Psoas muscle (tissue), 8 donors: ENCODE measurements at regions of chr12 and their contacts with region 1.

Region 1: DNA sequence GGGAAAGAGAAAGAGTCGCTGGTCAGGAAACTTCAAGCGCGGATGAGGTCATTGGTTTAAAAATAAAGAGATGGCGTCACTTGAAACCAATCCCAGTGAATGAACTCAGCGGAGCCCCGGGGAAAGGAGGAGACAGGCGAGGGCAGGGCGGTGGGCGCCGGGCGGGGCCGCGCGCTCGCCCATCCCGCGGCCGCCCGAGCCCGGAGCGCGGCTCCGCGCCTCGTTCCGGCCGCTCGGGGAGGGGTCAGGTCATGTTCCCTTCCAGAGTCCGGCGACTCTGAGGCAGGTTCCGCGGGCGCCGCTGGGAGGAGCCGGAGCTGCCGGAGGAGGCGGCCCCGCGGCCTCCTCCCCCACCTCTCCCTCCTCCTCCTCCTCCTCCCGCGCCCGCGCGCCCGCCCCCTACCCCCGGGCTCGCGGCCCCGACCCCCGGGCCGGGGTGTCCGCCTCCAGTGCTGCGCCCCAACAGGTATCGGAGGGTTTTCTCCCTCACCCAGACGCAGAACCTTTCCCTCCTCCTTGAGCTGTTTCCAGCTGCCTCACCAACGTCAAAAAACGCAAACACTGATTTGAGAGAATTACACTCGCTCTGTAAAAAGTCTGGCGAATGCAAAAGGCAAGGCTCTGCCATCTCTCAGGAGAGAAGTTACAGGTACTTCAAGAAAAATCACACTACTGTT is at the start of gene DUSP16:
- DNase-seq: peak; percentile 91 to 96
- ATAC-seq: peak; percentile 91 to 96 (median 94)
- H3K4me3 ChIP-seq: peak within 1 kb of the TSS; percentile 73
- H3K27ac ChIP-seq: peak within 1 kb of the TSS; percentile 98
- H3K4me1 ChIP-seq: peaks cover 20% of the 10 kb centered on the region
- H3K27me3 ChIP-seq: no peaks in the 10 kb centered on the region
- CTCF ChIP-seq: peak; percentile 28
- total RNA-seq, gene DUSP16: 14.2 to 23.8 (median 19.7) TPM

Region 2: GRCh38 chr12:12505544-12506495 is 56.9 kb before region 1 on chr12:
- intact Hi-C with region 1: loop called (anchors 5 kb)
- DNase-seq: no peak
- ATAC-seq: peak; percentile 34 to 60 (median 52)
- H3K4me3 ChIP-seq: peak overlapping the region; percentile 41
- H3K27ac ChIP-seq: peak overlapping the region; percentile 65
- H3K4me1 ChIP-seq: peaks cover 52% of the 10 kb centered on the region
- H3K27me3 ChIP-seq: no peaks in the 10 kb centered on the region
- CTCF ChIP-seq: no peak

Region 3: DNA sequence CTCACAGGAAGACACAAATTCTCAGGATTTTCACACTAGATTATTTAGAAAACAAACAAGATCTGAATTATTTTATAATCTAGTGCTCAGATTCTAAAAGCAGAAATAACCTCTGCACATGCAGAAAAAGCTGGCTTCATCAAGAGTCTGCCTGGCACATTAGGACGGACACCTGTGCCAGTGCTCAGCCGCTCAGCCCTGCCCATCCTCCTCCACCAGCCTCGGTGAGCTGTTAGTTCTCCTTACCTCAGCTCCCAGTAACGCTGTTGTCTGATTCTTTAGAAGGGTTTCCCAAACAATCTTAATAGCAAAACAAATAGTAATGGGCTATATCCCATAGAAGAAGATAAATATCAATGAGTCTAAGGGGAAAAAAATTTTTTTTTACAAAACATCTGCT is 27.7 kb before region 1 on chr12:
- intact Hi-C with region 1: loop called in 1 of 2 experiments (anchors 1 kb)
- DNase-seq: peak in 1 of 2 donors; percentile 58
- ATAC-seq: peak; percentile 72 to 80 (median 76)
- H3K4me3 ChIP-seq: peak overlapping the region; percentile 12
- H3K27ac ChIP-seq: peak overlapping the region; percentile 82
- H3K4me1 ChIP-seq: peaks cover 71% of the 10 kb centered on the region
- H3K27me3 ChIP-seq: no peaks in the 10 kb centered on the region
- CTCF ChIP-seq: no peak

Region 4: GRCh38 chr12:12654691-12655460 is 92.2 kb after region 1 on chr12:
- intact Hi-C with region 1: loop called in 1 of 2 experiments (anchors 10 kb)
- DNase-seq: no peak
- ATAC-seq: no peak
- H3K4me3 ChIP-seq: no peak overlapping the region
- H3K27ac ChIP-seq: no peak overlapping the region
- H3K4me1 ChIP-seq: peaks cover 3% of the 10 kb centered on the region
- H3K27me3 ChIP-seq: no peaks in the 10 kb centered on the region
- CTCF ChIP-seq: no peak

Region 5: DNA sequence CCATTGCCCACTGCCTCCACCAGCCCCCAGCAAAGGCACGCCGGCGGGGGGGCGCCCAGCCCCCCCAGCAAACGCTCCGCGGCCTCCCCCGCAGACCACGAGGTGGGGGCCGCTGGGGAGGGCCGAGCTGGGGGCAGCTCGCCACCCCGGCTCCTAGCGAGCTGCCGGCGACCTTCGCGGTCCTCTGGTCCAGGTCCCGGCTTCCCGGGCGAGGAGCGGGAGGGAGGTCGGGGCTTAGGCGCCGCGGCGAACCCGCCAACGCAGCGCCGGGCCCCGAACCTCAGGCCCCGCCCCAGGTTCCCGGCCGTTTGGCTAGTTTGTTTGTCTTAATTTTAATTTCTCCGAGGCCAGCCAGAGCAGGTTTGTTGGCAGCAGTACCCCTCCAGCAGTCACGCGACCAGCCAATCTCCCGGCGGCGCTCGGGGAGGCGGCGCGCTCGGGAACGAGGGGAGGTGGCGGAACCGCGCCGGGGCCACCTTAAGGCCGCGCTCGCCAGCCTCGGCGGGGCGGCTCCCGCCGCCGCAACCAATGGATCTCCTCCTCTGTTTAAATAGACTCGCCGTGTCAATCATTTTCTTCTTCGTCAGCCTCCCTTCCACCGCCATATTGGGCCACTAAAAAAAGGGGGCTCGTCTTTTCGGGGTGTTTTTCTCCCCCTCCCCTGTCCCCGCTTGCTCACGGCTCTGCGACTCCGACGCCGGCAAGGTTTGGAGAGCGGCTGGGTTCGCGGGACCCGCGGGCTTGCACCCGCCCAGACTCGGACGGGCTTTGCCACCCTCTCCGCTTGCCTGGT is 154.3 kb after region 1 on chr12 and contains the start of gene CDKN1B:
- intact Hi-C with region 1: loop called in 1 of 2 experiments (anchors 5 kb)
- DNase-seq: peak; percentile 91 to 96
- ATAC-seq: peak; percentile 95 to 97 (median 96)
- H3K4me3 ChIP-seq: peak within 1 kb of the TSS; percentile 84
- H3K27ac ChIP-seq: peak within 1 kb of the TSS; percentile 98
- H3K4me1 ChIP-seq: peaks cover 48% of the 10 kb centered on the region
- H3K27me3 ChIP-seq: no peaks in the 10 kb centered on the region
- CTCF ChIP-seq: no peak
- total RNA-seq, gene CDKN1B: 32.2 to 61.0 (median 38.0) TPM

Region 6: DNA sequence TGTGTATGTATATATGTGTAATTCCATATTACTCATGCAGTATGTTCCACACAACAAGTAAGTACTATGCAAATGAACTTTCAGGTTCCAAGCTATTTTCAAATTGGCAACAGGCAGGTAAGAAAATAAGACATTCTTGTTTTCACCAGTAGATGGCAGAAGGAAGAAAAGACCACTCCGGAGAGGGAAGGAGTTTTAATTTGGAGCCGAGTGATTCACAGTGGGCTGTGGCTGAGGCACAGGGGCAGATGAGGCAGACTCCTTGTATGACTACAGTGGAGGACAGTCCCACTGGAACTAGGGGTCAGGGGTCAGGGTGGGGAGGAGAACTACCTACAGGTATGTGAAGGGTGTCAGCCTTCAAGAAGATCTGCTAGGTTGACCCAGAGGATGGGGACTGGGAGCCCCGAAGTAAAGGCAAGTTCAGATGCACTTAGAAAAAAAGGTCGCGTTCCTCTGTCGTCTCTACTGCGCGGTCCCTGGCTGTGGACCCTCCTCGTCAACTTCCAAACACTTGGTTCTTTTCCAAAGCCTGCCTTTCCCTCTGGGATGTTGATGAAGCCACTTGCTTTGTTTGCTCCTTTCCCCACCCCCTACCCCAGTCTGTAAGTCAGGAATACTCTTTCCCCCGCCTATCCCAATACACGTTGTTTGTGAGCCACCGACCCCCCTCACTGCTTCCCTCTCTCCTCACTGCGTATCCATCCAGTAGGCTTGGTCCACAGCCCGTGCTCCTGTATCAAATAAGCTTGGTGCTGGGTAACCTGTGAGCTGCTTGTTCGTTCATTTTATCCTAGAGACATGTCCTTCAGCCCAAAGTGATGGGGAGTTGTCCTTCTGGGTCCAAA is 274.5 kb after region 1 on chr12:
- intact Hi-C with region 1: no loop called
- DNase-seq: peak; percentile 37 to 54
- ATAC-seq: peak; percentile 49 to 79 (median 70)
- H3K4me3 ChIP-seq: no peak overlapping the region
- H3K27ac ChIP-seq: no peak overlapping the region
- H3K4me1 ChIP-seq: no peaks in the 10 kb centered on the region
- H3K27me3 ChIP-seq: no peaks in the 10 kb centered on the region
- CTCF ChIP-seq: peak; percentile 38

Region 7: GRCh38 chr12:13539051-13539450 is 976.3 kb after region 1 on chr12:
- intact Hi-C with region 1: no loop called
- DNase-seq: no peak
- ATAC-seq: no peak
- H3K4me3 ChIP-seq: no peak overlapping the region
- H3K27ac ChIP-seq: no peak overlapping the region
- H3K4me1 ChIP-seq: no peaks in the 10 kb centered on the region
- H3K27me3 ChIP-seq: no peaks in the 10 kb centered on the region
- CTCF ChIP-seq: no peak